ENCODE measurements at regions of chr7 and their contacts with region 1.

Region 1: GRCh38 chr7:24979863-24980533 is at the start of gene OSBPL3:
- DNase-seq: peak; percentile 91
- H3K4me3 Mint-ChIP-seq: peak within 1 kb of the TSS; percentile 96
- H3K27ac Mint-ChIP-seq: peak within 1 kb of the TSS; percentile 96
- H3K4me1 Mint-ChIP-seq: peaks cover 58% of the 10 kb centered on the region
- H3K27me3 Mint-ChIP-seq: peaks cover 2% of the 10 kb centered on the region
- total RNA-seq, gene OSBPL3: 90.6 and 101 TPM in 2 replicates

Region 2: DNA sequence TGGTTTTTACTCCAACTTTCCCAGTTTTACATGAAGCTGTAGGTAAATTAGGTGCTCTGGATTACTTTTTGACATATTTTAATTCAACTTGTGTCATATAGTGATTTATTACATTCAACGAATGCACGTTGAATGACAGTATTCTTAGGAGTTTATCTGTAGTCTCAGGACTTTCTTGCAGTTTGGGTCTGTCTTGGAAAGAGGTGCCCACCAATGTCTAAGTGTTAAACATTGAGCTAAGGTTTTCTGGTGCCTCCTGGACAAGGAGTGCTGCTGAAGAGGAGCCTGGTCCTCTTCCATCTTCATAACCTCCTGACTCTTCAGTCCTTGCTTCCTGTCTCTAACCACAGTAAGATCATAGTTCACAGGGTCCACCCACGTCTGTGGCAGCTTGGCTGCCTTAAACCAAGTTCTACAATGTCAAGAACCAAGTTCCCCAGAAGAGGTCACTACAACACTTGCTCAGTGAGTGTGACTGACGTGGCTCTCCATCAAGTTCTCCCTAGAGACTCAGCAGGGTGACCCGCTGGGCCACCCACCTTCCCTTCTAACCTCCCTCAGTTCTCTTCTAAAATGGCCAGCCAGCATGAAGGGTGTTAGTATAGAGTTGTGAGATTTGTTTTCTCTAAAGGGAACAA is 689.9 kb before region 1 on chr7:
- intact Hi-C with region 1: loop called (anchors 1 kb)
- DNase-seq: peak; percentile 35
- H3K4me3 Mint-ChIP-seq: no peak overlapping the region
- H3K27ac Mint-ChIP-seq: no peak overlapping the region
- H3K4me1 Mint-ChIP-seq: peaks cover 8% of the 10 kb centered on the region
- H3K27me3 Mint-ChIP-seq: peaks cover 35% of the 10 kb centered on the region

Region 3: DNA sequence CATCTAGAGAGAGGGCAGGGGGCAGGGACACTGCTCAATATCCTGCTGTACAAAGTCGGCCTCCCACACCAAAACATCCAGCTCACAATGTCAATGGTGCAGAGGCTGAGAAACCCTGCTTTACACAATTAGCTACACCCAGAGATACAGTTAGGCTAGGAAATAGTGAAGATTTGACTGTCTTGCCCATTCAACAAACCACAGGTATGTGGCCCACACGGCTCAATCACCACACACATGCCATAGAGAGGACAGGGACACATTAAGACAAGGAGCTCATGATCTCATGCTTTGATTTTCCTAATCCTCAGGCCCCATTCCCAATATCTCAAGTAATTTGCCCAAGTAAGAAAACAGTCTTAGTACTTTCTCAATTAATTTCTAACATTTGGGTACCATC is 110.4 kb before region 1 on chr7:
- intact Hi-C with region 1: loop called (anchors 1 kb)
- DNase-seq: no peak
- H3K4me3 Mint-ChIP-seq: no peak overlapping the region
- H3K27ac Mint-ChIP-seq: peak overlapping the region; percentile 13
- H3K4me1 Mint-ChIP-seq: peaks cover 49% of the 10 kb centered on the region
- H3K27me3 Mint-ChIP-seq: no peaks in the 10 kb centered on the region

Region 4: DNA sequence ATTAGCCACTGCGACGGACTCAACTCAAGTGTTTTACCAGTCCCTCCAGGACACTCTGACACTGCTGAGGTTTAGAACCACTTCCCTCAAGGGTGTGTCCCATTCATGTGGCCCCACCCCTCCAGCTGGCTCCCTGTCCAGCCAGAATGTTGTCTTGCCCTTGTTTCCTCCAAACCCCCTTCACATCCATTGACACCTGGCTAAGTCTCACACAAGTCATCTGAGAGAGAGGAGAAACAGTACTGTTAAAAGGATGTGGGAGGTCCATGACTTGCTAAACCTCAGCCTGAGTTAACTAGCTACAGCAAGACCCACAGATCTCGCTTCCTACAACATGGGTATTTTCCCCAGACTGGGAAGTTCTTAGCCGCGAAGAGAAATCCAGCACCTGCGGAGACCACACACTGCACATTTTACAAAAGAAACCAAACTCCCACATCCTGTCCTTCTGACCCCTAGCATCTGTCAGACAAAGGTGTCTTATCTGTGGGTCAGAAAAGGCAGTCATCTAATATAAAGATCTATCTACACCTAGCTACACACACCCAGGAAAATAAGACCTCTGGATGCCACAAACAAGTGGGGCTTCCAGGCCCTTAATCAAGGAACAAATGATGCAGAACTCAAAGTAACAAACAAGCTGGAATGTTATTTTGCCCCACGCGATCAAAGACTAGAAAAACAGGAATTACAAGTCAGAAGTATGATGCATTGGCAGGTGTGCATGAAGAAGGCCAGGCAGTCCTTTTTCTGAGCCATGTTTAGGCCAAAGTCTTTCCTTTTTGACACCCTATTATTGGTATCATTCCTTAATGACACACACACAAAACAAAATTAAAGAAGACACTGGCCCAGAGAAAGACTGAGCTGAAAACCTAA is 13.9 kb before region 1 on chr7:
- intact Hi-C with region 1: loop called (anchors 1 kb)
- DNase-seq: peak; percentile 52
- H3K4me3 Mint-ChIP-seq: peak overlapping the region; percentile 59
- H3K27ac Mint-ChIP-seq: peak overlapping the region; percentile 89
- H3K4me1 Mint-ChIP-seq: peaks cover 80% of the 10 kb centered on the region
- H3K27me3 Mint-ChIP-seq: no peaks in the 10 kb centered on the region

Region 5: DNA sequence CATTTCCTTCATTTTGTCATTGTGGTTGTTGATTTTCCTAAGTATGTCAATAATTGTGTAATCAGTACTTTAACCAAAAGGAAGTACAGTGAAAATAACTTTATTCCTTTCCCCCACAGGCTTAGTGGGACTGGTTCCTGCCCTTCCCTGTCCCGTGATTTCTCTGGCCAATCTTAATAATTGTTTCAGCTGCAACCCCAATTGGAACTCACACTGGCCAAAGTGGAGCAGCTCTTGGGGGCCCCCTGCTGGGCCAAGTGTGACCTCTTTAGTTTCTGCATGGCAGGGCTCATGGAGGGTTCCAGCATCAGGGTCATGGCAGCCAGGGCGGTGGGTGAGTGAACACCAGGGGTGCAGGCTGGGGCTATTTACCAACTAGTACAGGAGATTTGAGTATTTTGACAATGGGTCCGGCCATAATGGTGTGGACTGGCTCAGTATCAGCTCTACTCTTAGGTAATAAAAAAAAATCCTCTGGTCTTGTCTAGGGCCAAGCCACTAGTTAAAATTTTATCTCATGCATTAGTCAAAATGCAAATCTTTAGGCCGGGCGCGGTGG is 113.3 kb after region 1 on chr7:
- intact Hi-C with region 1: loop called (anchors 1 kb)
- DNase-seq: peak; percentile 67
- H3K4me3 Mint-ChIP-seq: no peak overlapping the region
- H3K27ac Mint-ChIP-seq: no peak overlapping the region
- H3K4me1 Mint-ChIP-seq: peaks cover 18% of the 10 kb centered on the region
- H3K27me3 Mint-ChIP-seq: peaks cover 18% of the 10 kb centered on the region

Region 6: GRCh38 chr7:25191640-25192039 is 211.6 kb after region 1 on chr7:
- intact Hi-C with region 1: no loop called
- DNase-seq: no peak
- H3K4me3 Mint-ChIP-seq: no peak overlapping the region
- H3K27ac Mint-ChIP-seq: no peak overlapping the region
- H3K4me1 Mint-ChIP-seq: no peaks in the 10 kb centered on the region
- H3K27me3 Mint-ChIP-seq: peaks cover 15% of the 10 kb centered on the region

Measured in activated T-helper 1 cell treated with anti-CD3 and anti-CD28 coated beads, Interleukin-12 subunit alpha, Interleukin-12 subunit beta, Interleukin-2, Interleukin-4 antibody, amounts not matched to agents 30 ng/mL and 10 ng/mL and 1 ng/mL, durations not matched to agents 14 hours and 24 hours and 36 hours (primary cell).